Caco-2 (cell line): ENCODE measurements at regions of chr3 and their contacts with region 1.

Region 1: DNA sequence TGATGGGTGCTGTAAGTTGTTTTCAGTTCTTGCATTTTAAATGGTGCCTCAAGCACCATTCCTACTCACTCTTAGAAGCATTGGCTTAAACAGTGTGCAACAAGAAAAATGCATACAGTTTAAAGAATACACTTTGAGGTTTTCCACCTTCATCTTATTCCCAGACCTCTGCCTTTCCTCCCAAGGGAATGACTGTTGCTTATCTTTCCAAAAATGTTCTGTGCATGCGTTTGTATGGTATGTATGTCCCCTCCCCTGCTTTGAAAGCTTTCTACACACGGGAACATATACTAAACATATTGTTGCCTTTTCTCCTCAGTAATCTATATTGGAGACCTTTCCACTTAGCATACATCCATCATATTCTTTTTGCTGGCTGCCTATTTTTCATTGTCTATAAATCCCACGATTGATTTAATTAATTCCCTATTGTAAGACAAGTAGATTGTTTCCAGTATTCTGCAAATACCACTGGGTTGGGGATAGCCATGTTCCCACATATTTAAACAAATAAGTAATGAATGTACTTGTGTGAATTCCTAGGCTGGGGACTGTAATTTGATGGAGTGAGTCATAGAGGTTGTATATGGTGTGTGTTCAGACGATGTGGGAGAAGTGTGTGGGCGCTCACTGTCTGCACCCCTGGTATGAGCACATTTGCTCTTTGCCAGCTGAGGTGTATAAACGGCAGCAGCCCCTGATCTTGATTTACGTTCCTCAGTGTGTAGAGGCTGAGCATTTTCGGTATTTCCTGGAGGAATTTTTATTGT is 5.8 kb downstream of the TRAK1 start:
- DNase-seq: no peak
- H3K4me3 ChIP-seq: no peak overlapping the region
- H3K4me3 Mint-ChIP-seq: no peak overlapping the region
- H3K27ac Mint-ChIP-seq: no peak overlapping the region
- H3K4me1 ChIP-seq: no peaks in the 10 kb centered on the region
- H3K4me1 Mint-ChIP-seq: peaks cover 9% of the 10 kb centered on the region
- H3K27me3 ChIP-seq: no peaks in the 10 kb centered on the region
- H3K27me3 Mint-ChIP-seq: no peaks in the 10 kb centered on the region
- CTCF ChIP-seq: no peak

Region 2: DNA sequence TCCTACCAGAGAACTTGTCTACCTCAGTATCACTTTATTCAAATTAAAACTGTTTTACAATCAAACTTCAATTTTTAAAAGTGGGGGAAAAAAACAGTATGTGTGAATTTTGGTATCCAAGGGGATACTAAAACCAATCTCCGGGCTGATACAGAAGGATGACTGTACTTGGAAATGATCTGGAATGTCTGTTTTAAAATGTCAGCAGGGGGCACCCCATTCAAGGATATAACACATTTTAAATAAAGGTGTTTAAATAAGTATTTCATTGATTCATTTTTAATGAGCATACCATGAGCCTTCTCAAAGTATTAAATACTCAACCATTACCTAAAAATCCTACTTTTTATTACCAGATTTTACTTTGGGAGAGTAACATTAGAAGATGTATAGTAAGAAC is 203.0 kb before region 1 on chr3:
- CTCF ChIA-PET with region 1: no interaction called
- POLR2A ChIA-PET with region 1: no interaction called
- intact Hi-C with region 1: loop called (anchors 1 kb)
- DNase-seq: peak in 1 of 2 experiments; percentile 44
- H3K4me3 ChIP-seq: no peak overlapping the region
- H3K4me3 Mint-ChIP-seq: no peak overlapping the region
- H3K27ac Mint-ChIP-seq: no peak overlapping the region
- H3K4me1 ChIP-seq: no peaks in the 10 kb centered on the region
- H3K4me1 Mint-ChIP-seq: no peaks in the 10 kb centered on the region
- H3K27me3 ChIP-seq: no peaks in the 10 kb centered on the region
- H3K27me3 Mint-ChIP-seq: no peaks in the 10 kb centered on the region
- CTCF ChIP-seq: peak in 1 of 2 experiments; percentile 34

Region 3: GRCh38 chr3:41961750-41962679 is 135.0 kb before region 1 on chr3 and contains the start of gene ULK4:
- CTCF ChIA-PET with region 1: interaction called, 3 read pairs
- POLR2A ChIA-PET with region 1: no interaction called
- intact Hi-C with region 1: loop called (anchors 1 kb)
- DNase-seq: peak; percentile 97 to 98
- H3K4me3 ChIP-seq: peak within 1 kb of the TSS; percentile 61
- H3K4me3 Mint-ChIP-seq: peak within 1 kb of the TSS; percentile 99
- H3K27ac Mint-ChIP-seq: peak within 1 kb of the TSS; percentile 98
- H3K4me1 ChIP-seq: peaks cover 5% of the 10 kb centered on the region; the same call in 1 of the 2 replicates
- H3K4me1 Mint-ChIP-seq: peaks cover 7% of the 10 kb centered on the region
- H3K27me3 ChIP-seq: no peaks in the 10 kb centered on the region
- H3K27me3 Mint-ChIP-seq: no peaks in the 10 kb centered on the region
- CTCF ChIP-seq: no peak
- total RNA-seq, gene ULK4: 4.2 and 4.6 TPM in 2 replicates

Region 4: GRCh38 chr3:42012935-42013690 is 83.9 kb before region 1 on chr3:
- CTCF ChIA-PET with region 1: no interaction called
- POLR2A ChIA-PET with region 1: no interaction called
- intact Hi-C with region 1: loop called (anchors 1 kb)
- DNase-seq: peak; percentile 59 to 76
- H3K4me3 ChIP-seq: peak overlapping the region; percentile 89
- H3K4me3 Mint-ChIP-seq: peak overlapping the region; percentile 81
- H3K27ac Mint-ChIP-seq: peak overlapping the region; percentile 72
- H3K4me1 ChIP-seq: 0 out of 2 replicates have a peak, but pooled peaks cover 9% of the 10 kb centered on the region
- H3K4me1 Mint-ChIP-seq: peaks cover 21% of the 10 kb centered on the region
- H3K27me3 ChIP-seq: no peaks in the 10 kb centered on the region; the same call in 1 of the 2 replicates
- H3K27me3 Mint-ChIP-seq: no peaks in the 10 kb centered on the region
- CTCF ChIP-seq: no peak

Region 5: DNA sequence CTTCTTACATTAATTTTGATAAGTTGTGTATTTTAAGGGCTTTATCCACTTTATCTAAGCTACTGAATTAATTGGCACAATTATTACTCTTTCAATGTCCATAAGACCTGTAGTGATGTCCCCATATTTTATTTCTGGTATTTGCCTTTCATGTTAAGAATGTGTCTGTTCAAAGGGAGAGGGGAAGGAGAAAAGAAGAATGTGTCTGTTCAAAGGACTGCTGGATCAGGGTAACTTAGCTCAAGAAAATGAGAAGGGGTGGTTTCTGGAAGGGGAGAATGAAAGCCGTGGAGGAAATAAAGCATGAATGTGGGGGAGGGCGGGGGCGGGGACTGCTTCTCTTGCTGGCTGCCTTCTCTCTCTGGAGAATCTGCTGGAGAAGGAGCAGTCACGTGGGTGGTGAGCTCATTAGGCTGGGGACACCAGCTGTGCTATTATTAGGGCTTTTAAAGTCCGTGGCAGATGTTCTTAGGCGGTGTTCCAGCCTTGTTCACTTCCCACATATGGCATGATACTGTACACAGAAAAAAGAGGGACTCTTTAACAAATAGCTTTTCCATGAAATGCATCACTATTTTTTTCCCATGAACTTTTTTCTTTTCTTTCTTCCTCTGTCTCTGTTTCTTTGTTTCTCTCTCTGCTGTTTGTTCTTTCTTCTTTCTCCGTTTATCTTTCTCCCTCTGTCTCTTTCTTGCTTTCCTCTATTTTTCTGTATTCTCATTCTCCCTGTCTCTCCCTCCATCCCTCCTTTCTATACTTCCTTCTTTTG is 71.4 kb before region 1 on chr3:
- CTCF ChIA-PET with region 1: no interaction called
- POLR2A ChIA-PET with region 1: no interaction called
- intact Hi-C with region 1: loop called (anchors 5 kb)
- DNase-seq: peak; percentile 63 to 76
- H3K4me3 ChIP-seq: no peak overlapping the region
- H3K4me3 Mint-ChIP-seq: peak overlapping the region; percentile 64
- H3K27ac Mint-ChIP-seq: peak overlapping the region; percentile 67
- H3K4me1 ChIP-seq: peaks cover 28% of the 10 kb centered on the region
- H3K4me1 Mint-ChIP-seq: peaks cover 34% of the 10 kb centered on the region
- H3K27me3 ChIP-seq: no peaks in the 10 kb centered on the region
- H3K27me3 Mint-ChIP-seq: no peaks in the 10 kb centered on the region
- CTCF ChIP-seq: no peak

Region 6: DNA sequence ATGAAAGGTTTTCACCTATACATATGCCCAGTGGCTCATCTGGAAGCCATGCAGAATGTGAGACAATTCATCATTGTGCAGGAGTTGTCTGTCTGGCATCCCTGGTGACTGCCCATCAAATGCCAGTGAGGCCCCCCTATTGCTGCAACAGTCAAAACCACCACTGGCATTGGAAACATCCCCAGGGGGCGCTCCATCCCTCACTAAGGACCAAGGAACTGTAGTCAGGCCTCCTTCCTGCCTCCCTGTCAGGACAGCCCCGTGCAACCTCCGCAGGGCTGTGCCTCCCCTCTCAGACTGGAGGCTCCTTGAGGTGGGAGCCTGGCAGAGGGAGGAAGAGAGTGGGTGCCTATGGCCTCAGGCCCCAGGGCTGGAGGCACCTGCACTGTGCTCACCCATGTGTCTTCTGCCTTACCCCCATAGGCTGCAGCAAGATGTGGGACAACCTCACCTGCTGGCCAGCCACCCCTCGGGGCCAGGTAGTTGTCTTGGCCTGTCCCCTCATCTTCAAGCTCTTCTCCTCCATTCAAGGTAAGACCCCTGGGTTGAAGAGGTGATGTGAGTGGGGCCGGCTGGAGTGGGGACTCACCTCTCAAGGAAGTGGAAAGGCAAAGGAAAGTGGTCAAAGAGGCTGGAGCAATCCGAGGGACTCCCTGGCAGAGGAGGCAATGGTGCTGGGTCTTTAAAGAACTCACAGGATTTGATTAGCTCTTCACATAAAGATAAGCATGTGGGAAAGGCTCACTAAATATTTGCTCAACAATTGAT is 422.0 kb after region 1 on chr3:
- CTCF ChIA-PET with region 1: no interaction called
- POLR2A ChIA-PET with region 1: no interaction called
- intact Hi-C with region 1: no loop called
- DNase-seq: no peak
- H3K4me3 ChIP-seq: no peak overlapping the region
- H3K4me3 Mint-ChIP-seq: no peak overlapping the region
- H3K27ac Mint-ChIP-seq: no peak overlapping the region
- H3K4me1 ChIP-seq: peaks cover 11% of the 10 kb centered on the region
- H3K4me1 Mint-ChIP-seq: peaks cover 13% of the 10 kb centered on the region
- H3K27me3 ChIP-seq: no peaks in the 10 kb centered on the region
- H3K27me3 Mint-ChIP-seq: no peaks in the 10 kb centered on the region
- CTCF ChIP-seq: no peak